ENCODE measurements at regions of chr5 and their contacts with region 1.

Region 1: DNA sequence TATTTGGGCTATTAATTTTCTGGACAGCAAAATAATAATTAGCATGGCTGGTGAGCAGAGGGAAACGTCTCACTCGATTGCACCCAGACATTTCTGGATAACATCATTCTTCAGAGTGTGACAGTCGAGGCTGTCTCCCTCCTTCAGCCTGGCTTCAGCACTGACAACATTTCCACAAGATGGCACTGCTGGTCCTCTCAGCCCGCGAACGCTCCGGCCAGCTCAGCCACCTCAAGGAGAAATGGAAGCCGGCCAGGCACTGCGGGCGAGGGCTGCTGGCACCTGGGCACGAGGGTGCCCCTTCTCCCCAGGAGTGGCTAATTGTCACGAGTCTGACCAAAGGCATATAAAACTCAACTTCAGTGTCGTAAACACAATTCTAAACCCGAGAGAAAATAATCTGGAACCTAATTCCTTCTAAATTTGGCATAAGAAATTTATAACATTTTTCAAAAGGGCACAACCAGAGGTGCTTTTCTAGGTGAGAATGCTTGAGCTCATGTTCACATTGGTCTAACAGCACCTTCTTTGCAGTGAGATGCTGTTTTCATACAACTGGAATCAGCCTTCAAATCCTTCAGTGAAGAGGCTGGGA is 65.9 kb downstream of the DAP start:
- DNase-seq: peak; percentile 75
- H3K4me3 ChIP-seq: no peak overlapping the region
- H3K27ac ChIP-seq: no peak overlapping the region
- H3K4me1 ChIP-seq: peaks cover 0 to 9% (median 3%) of the 10 kb centered on the region in 4 donors
- H3K27me3 ChIP-seq: no peaks in the 10 kb centered on the region
- CTCF ChIP-seq: peak; percentile 60 to 69 (median 67)
- EP300 ChIP-seq: no peak
- POLR2A ChIP-seq: no peak

Region 2: GRCh38 chr5:10856683-10857337 is 161.7 kb after region 1 on chr5:
- in situ Hi-C with region 1: no loop called
- intact Hi-C with region 1: no loop called
- DNase-seq: peak; percentile 16
- H3K4me3 ChIP-seq: no peak overlapping the region
- H3K27ac ChIP-seq: no peak overlapping the region
- H3K4me1 ChIP-seq: peaks cover 0 to 21% (median 3%) of the 10 kb centered on the region in 4 donors
- H3K27me3 ChIP-seq: peaks cover 21% of the 10 kb centered on the region
- CTCF ChIP-seq: peak; percentile 42 to 64 (median 58)
- EP300 ChIP-seq: no peak
- POLR2A ChIP-seq: no peak

Region 3: DNA sequence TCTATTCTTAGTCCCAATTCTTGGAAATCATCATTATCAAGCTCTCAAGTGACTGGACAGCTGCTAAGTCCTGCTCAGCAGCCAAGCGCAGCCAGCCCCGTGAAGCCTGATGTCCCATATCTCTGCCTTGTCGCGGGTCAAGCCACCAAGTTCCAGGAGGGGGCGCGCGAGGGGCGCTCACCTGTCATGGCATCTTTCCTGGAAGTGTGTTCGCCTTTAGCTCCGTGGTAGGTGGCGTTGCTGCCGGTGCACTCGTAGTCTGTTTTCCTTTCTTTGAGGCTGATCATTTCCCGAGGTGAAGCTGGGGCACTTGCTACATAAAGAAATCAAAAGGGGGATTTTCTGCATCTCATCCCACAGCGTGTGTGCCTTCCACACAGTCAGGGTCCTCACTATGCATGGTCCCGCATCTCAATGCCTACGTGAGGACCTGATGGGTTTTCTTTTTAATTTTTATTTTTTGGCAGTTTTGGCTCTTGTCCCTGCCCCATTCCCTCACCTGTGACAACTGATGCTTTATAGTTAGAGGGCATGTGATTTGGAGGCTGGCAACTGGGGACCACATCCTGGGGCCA is 292.9 kb after region 1 on chr5:
- in situ Hi-C with region 1: no loop called
- intact Hi-C with region 1: loop called (anchors 5 kb)
- DNase-seq: peak; percentile 62
- H3K4me3 ChIP-seq: no peak overlapping the region
- H3K27ac ChIP-seq: no peak overlapping the region
- H3K4me1 ChIP-seq: no peaks in the 10 kb centered on the region
- H3K27me3 ChIP-seq: peaks cover 20% of the 10 kb centered on the region
- CTCF ChIP-seq: peak; percentile 40 to 63 (median 52)
- EP300 ChIP-seq: no peak
- POLR2A ChIP-seq: no peak

Measured in transverse colon (tissue), 4 donors.